ENCODE measurements at regions of chr4 and their contacts with region 1.

Region 1: DNA sequence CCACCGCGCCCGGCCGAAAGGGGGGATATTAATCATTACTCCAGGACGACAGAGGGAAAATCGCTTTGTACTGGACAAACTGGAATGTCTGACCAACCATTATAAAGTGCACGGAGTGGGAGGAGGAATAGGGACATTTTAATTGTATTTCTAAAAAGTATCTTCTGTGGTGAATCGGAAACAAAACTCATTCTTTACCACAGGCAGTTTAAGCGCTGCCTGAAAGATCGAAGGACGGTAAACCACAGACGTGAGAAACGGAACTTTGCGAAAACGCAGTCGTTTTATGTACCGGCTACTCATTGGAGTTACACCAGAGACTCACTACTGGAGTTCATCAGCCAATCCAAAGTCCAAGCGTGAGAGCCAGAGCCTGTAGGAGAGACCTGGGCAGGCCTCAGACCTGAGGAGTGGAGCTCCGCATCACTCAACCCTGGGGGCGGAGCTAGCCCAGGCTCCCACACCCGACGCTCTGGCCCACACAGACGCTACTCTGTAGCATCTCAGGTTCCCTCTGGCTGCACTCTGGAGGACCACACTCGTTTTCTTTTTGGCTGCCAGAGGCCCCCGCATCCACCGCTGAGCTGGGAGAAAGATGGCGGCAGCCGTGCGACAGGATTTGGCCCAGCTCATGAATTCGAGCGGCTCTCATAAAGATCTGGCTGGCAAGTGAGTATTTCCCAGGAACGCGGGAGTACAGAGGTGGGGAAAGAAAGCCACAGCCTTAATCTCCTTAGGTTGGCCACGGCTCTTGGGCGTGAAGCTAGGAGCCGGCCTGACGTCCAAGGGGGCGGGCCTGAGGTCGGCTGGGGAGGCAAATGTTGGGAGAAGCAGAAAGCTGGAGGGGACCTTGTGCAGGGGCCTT is at the start of gene COPS4:
- DNase-seq: peak; percentile 87 to 99 (median 98)
- H3K4me3 ChIP-seq: peak within 1 kb of the TSS; percentile 65 to 97 (median 86)
- H3K27ac ChIP-seq: peak within 1 kb of the TSS; percentile 75 to 99 (median 93)
- H3K27me3 ChIP-seq: no peaks in the 10 kb centered on the region
- CTCF ChIP-seq: peak in 54 of 56 donors; percentile 15 to 72 (median 53)
- total RNA-seq, gene COPS4: 22.8 to 75.1 (median 50.8) TPM

Region 2: GRCh38 chr4:82797405-82798111 is 237.3 kb before region 1 on chr4:
- intact Hi-C with region 1: no loop called
- DNase-seq: peak in 4 of 10 donors; percentile 22 to 74 (median 64)
- H3K4me3 ChIP-seq: peak overlapping the region; percentile 49 to 94 (median 86)
- H3K27ac ChIP-seq: peak overlapping the region; percentile 20 to 97 (median 92)
- H3K27me3 ChIP-seq: no peaks in the 10 kb centered on the region
- CTCF ChIP-seq: peak in 2 of 56 donors; percentile 9 to 12

Region 3: DNA sequence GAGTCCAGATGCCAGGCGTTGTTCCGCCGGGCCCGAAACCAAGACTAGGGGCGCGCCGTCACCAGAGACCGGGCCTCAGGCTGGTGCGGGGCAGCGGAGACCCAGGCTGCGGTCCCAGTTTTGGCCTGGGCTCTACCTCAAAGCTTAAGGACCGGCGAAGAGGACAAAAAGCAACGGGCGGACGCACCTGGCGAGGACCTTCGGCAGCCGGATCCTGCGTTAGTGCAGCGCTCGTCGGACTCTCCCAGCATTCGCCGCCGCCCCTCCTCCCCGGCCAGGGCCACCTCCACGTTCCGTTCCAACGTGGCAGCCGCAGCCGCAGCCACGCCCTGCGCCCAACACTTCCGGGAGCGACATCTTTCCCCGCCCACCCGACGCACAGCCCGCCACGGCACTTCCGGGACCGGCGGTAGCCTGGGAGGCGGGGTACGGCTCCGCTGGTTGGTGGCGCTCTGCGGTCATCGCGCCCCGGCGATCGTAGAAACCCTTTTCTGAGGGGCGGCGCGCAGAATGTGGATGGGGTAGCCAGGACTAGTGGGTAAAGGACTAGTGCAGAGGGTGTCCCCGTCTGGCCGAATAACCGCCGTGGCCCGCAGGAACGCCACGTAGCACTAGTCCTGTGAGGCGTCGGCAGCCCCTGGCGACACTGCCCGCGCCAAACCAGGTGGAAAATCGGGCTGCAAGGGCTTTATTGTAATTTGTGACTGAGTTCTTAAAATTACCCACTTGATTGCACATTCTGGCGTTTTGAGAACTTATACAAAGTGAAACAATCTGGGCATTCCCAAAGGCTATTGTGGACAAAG is 143.8 kb before region 1 on chr4 and contains the start of gene SEC31A:
- intact Hi-C with region 1: loop called (anchors 1 to 2 kb)
- DNase-seq: peak; percentile 88 to 96 (median 92)
- H3K4me3 ChIP-seq: peak within 1 kb of the TSS; percentile 58 to 100 (median 91)
- H3K27ac ChIP-seq: peak within 1 kb of the TSS; percentile 62 to 99 (median 93)
- H3K27me3 ChIP-seq: no peaks in the 10 kb centered on the region
- CTCF ChIP-seq: peak in 50 of 56 donors; percentile 13 to 74 (median 44)
- total RNA-seq, gene SEC31A: 85.5 to 171 (median 130) TPM

Region 4: DNA sequence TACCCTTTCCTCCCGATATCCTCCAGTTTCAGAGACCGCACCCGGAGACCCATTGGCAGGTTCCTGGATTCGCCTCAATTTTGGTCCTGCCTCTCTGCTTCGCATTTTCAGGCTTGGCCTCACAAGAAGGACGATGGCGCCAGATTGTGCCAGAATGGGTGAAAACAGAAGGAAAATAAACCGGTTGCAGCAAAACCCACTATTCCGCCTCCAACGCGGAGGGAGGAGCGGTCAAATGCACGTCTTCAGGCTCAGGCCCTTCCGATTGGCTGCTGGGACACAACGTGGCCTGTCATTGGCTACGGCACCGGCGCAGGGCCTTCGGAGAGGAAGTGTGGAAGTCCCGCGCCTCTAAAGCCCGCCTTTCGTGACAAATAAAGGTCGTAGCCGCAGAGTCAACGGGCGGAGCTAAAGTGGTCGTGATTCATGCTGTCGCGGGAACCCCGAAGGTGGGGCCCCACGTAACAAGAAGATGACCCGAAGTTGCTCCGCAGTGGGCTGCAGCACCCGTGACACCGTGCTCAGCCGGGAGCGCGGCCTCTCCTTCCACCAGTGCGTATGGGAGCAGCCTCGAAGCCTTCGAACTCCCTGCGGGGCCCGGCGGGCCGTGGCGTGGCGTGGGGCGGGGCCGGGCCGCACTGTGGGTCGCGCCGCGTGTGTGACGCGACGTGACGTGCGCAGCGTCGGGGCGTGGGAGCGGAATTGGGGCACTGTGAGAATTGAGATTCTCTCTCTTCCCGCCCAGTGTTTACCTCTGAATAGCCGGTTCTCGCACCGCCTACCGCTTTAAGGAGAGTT is 134.3 kb before region 1 on chr4 and contains the start of gene THAP9:
- intact Hi-C with region 1: loop called in 1 of 2 experiments (anchors 5 kb)
- DNase-seq: peak; percentile 98 to 100 (median 99)
- H3K4me3 ChIP-seq: peak within 1 kb of the TSS; percentile 58 to 97 (median 85)
- H3K27ac ChIP-seq: peak within 1 kb of the TSS; percentile 80 to 100 (median 98)
- H3K27me3 ChIP-seq: no peaks in the 10 kb centered on the region
- CTCF ChIP-seq: peak in 20 of 56 donors; percentile 1 to 50 (median 15)
- total RNA-seq, gene THAP9: 4.1 to 16.4 (median 7.3) TPM

Region 5: DNA sequence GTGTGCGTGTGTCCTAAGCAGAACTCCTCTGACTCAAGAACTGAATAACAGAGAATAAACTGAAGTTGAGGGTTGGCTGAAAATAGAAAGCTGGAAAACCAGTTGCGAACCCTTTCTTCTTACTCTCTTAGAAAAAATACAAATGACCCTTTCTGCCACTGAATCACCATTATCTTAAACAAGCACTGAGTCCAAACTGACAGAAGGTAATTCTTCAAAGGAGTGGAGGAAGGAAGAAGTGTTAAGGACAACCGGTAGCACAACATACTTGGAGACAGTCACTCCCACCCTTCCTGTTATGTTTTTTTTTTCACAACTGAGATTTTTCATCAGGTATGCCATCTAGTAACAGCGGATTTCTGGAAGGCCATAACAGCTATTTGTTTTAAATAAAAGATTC is 382.7 kb after region 1 on chr4:
- intact Hi-C with region 1: no loop called
- DNase-seq: no peak
- H3K4me3 ChIP-seq: no peak overlapping the region
- H3K27ac ChIP-seq: no peak overlapping the region
- H3K27me3 ChIP-seq: no peaks in the 10 kb centered on the region
- CTCF ChIP-seq: no peak